ENCODE measurements at regions of chr10 and their contacts with region 1.

Region 1: DNA sequence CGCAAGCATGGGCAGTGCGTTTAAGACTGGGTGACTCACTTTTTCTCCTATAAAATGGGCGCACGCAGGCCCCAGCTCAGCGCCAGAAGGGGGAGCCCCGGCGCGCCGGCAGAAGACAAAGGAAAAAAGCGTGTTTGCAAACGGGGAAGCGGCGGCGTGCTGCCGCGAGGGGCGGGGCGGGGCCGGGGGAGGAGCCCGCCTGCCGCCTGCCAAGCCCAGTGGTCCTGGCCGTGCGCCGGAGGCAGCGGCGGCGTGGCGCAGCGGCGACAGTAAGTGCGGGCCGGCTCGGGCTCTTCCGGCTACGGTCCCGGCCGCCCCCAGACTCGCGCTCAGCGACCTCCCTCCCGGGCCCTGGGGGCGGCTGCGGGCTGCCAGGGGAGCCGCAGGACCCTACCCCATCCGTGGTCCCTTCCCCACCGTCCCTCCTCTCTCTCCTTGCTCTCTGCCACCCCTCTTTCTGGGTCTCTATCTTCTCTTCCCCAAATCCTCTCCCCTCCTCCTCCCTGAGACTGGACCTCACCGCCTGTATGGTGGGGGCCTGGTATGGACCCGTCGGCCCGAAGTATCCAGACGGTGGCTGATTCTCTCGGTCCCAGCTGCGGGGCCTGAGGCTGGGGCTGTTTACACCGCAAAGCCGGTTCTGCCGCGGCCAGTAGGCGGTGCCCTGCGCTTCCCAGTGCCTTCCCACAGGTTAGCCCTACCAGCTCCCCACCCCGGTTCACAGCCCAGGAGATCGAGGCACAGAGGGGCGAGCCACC is at the start of gene SLC29A3:
- DNase-seq: no peak
- ATAC-seq: peak; percentile 95
- H3K4me3 ChIP-seq: peak within 1 kb of the TSS; percentile 75 to 80
- H3K27ac ChIP-seq: peak within 1 kb of the TSS; percentile 69
- H3K4me1 ChIP-seq: peaks cover 10% of the 10 kb centered on the region
- H3K27me3 ChIP-seq: no peaks in the 10 kb centered on the region
- CTCF ChIP-seq: peak; percentile 93
- total RNA-seq, gene SLC29A3: 7.6 TPM

Region 2: GRCh38 chr10:71383972-71384687 is 64.9 kb after region 1 on chr10:
- CTCF ChIA-PET with region 1: interaction called, 4 read pairs
- POLR2A ChIA-PET with region 1: no interaction called
- in situ Hi-C with region 1: no loop called
- intact Hi-C with region 1: loop called (anchors 5 kb)
- DNase-seq: peak; percentile 45
- ATAC-seq: peak; percentile 96
- H3K4me3 ChIP-seq: no peak overlapping the region
- H3K27ac ChIP-seq: no peak overlapping the region
- H3K4me1 ChIP-seq: no peaks in the 10 kb centered on the region
- H3K27me3 ChIP-seq: peaks cover 2% of the 10 kb centered on the region; the same call in 1 of the 2 replicates
- CTCF ChIP-seq: peak; percentile 99

Region 3: GRCh38 chr10:71496927-71497762 is 177.9 kb after region 1 on chr10:
- CTCF ChIA-PET with region 1: no interaction called
- POLR2A ChIA-PET with region 1: interaction called, 12 read pairs
- in situ Hi-C with region 1: no loop called
- intact Hi-C with region 1: no loop called
- DNase-seq: no peak
- ATAC-seq: no peak
- H3K4me3 ChIP-seq: no peak overlapping the region
- H3K27ac ChIP-seq: no peak overlapping the region
- H3K4me1 ChIP-seq: no peaks in the 10 kb centered on the region
- H3K27me3 ChIP-seq: peaks cover 7% of the 10 kb centered on the region
- CTCF ChIP-seq: no peak

Region 4: DNA sequence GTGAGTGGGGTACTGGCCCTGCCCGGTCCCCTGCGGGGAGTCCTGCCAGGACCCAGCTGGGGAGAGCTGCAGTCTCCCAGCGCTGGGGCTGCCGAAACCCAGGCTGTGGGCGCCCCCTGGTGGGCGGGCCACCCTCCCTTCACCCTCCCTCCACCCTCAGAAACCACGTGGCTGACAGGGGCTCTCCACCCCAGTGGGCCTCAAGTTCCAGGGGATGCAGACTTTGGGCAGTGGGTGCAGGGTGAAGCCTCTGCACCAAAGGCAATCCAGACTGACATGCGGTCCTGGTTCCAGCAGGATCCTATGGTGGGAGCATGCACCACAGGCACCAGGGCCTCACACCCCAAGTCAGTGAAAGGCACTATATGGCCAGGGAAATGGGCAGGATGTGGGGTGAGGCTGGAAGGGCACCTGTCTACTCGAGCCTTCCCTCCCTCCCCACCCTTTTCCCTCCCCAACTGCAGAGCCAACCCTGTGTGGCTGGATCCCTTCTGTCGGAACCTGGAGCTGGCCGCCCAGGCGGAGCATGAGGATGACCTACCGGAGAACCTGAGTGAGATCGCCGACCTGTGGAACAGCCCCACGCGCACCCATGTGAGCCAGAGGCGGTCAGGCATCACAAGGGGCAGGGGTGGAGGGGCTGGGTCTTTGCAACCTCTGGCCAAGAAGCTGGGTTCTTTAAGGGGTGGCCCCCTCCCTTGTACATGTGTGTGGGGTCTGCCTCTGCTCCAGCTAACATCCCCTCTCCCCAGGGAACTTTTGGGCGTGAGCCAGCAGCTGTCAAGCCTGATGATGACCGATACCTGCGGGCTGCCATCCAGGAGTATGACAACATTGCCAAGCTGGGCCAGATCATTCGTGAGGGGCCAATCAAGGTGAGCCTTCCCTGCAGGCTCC is 493.0 kb after region 1 on chr10:
- CTCF ChIA-PET with region 1: no interaction called
- POLR2A ChIA-PET with region 1: no interaction called
- in situ Hi-C with region 1: no loop called
- intact Hi-C with region 1: loop called (anchors 10 kb)
- DNase-seq: no peak
- ATAC-seq: peak; percentile 72
- H3K4me3 ChIP-seq: no peak overlapping the region
- H3K27ac ChIP-seq: peak overlapping the region; percentile 14; the same call in 1 of the 2 replicates
- H3K4me1 ChIP-seq: peaks cover 49% of the 10 kb centered on the region
- H3K27me3 ChIP-seq: no peaks in the 10 kb centered on the region
- CTCF ChIP-seq: peak; percentile 91; the same call in 1 of the 2 replicates

Measured in Panc1 (cell line).